ENCODE measurements at regions of chr1 and their contacts with region 1.

Region 1: DNA sequence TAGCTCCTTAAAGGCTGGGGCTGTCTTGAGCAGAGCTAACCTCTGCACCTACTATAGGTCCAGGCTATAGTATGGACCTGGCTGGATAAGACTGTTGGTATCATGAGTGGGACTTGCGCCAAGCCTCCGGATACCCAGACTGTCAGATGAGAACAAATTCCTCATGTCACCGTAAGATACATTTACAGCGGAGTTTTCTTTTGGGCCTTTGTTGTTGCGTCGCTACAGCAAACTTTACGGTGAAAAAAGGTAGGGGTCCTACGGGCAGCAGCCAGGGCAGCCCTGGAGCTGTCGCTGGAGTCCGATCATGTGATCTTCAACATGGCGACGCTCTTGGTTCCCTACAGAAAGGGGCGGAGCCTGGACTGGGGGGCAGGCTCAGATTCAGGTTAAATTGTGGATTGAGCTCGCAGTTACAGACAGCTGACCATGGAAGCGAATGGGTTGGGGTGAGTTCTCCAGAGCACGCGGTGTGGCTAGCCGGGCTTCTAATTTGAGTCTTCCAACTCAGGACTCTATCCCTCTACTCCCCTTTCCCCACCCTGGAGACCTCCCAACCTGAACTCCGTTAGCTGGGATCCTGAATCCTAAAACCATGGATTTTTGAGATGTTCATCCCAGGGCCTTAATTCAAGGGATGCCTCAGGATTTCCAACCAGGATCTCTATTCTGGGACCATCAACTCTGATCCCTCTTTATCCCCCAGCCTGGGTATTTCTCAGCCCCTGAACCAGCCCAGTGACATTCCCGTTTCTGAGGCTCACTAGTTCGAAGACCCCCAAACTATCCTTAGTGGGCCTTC is at the start of gene UROD:
- DNase-seq: peak; percentile 77 to 96 (median 86)
- ATAC-seq: peak; percentile 82
- H3K4me3 ChIP-seq: peak within 1 kb of the TSS; percentile 84
- H3K4me3 Mint-ChIP-seq: peak within 1 kb of the TSS; percentile 89
- H3K27ac ChIP-seq: peak within 1 kb of the TSS; percentile 59 to 62
- H3K27ac Mint-ChIP-seq: peak within 1 kb of the TSS; percentile 91
- H3K4me1 ChIP-seq: peaks cover 63% of the 10 kb centered on the region
- H3K4me1 Mint-ChIP-seq: peaks cover 61% of the 10 kb centered on the region
- H3K27me3 ChIP-seq: no peaks in the 10 kb centered on the region
- H3K27me3 Mint-ChIP-seq: no peaks in the 10 kb centered on the region
- CTCF ChIP-seq: no peak
- total RNA-seq, gene UROD: 41.0 to 42.4 TPM

Region 2: DNA sequence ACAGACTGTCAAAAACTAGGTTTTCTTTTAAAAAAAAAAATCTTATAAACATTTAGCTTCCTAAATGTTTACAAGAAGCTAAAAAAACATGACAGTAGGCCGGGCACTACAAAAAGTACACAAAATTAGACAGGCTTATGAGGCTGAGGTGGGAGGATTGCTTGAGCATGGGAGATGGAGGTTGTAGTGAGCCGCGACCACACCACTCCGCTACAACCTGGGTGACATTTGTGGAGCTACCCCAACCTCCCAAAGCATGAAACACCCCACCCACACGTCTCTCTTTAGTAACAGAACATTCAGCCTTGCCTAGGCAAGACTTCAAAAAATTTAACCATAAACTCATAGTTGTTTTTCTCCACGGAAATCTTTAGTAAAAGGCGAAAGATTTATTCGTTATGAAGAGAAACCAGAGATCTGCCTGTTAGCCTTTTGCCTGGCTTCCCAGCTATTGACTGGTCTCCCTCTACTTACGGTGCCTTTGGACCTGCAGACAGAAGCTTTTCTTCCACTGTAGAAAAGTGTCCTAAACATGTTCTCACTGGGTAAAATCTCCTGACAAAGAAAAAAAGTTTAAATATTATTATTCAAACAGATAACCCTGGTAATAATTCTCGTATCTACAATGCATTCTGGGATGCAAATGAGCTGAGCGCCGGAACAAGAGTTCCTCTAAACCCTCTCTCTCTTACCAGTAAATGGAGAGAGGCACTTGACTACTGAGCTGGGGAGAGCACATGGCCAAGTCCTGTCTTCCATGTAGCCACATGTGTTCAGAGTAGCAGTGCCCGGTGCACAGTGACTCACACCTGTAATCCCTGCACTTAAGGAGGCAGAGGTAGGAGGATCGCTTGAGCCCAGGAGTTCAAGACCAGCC is 290.3 kb before region 1 on chr1:
- CTCF ChIA-PET with region 1: no interaction called
- POLR2A ChIA-PET with region 1: interaction called, 26 read pairs
- intact Hi-C with region 1: loop called in 1 of 2 experiments (anchors 5 kb)
- DNase-seq: peak; percentile 16 to 93 (median 48)
- ATAC-seq: peak; percentile 75
- H3K4me3 ChIP-seq: peak overlapping the region; percentile 6
- H3K4me3 Mint-ChIP-seq: peak overlapping the region; percentile 84
- H3K27ac ChIP-seq: peak overlapping the region; percentile 30 to 76
- H3K27ac Mint-ChIP-seq: peak overlapping the region; percentile 90
- H3K4me1 ChIP-seq: peaks cover 77% of the 10 kb centered on the region
- H3K4me1 Mint-ChIP-seq: peaks cover 68% of the 10 kb centered on the region
- H3K27me3 ChIP-seq: no peaks in the 10 kb centered on the region
- H3K27me3 Mint-ChIP-seq: no peaks in the 10 kb centered on the region
- CTCF ChIP-seq: no peak

Region 3: DNA sequence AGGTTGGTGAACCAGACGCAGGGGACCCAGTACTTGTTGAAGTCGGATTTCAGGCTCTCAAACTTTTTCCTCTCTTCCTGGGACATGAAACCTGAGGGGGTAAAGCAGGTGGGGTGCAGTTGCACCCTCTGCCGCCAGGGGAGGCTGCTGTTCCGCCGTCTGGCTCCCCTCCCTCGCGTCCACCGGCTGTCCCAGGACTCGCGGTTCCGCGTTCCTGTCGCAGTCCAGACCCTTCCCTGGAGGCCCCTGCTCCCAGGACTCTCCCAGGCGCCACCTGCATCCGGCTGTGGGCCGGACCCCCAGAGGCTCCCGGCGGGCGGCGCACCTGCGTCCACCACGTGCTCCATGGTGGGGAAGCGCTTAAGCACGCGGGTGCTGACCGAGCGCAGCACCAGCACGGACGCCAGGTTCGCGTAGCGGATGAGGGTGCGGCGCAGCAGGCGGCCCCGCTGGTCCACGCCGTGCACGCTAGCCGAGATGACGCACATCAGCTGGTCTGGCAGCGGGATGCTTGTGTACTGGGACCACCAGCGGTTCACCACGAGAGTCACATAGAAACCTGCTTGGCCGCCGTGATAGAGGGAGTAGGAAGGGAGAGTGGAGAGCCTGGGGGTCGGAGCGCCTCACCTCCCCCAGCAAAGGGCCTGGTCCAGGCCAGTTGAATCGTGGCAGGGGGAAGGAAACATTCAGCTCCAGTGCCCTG is 225.7 kb before region 1 on chr1:
- CTCF ChIA-PET with region 1: interaction called, 6 read pairs
- POLR2A ChIA-PET with region 1: interaction called, 9 read pairs
- intact Hi-C with region 1: loop called in 1 of 2 experiments (anchors 2 kb)
- DNase-seq: peak; percentile 64 to 89 (median 74)
- ATAC-seq: peak; percentile 84
- H3K4me3 ChIP-seq: peak overlapping the region; percentile 58
- H3K4me3 Mint-ChIP-seq: peak overlapping the region; percentile 86
- H3K27ac ChIP-seq: peak overlapping the region; percentile 4 to 37
- H3K27ac Mint-ChIP-seq: peak overlapping the region; percentile 53
- H3K4me1 ChIP-seq: peaks cover 35% of the 10 kb centered on the region
- H3K4me1 Mint-ChIP-seq: peaks cover 31% of the 10 kb centered on the region
- H3K27me3 ChIP-seq: no peaks in the 10 kb centered on the region
- H3K27me3 Mint-ChIP-seq: no peaks in the 10 kb centered on the region
- CTCF ChIP-seq: peak; percentile 99

Region 4: DNA sequence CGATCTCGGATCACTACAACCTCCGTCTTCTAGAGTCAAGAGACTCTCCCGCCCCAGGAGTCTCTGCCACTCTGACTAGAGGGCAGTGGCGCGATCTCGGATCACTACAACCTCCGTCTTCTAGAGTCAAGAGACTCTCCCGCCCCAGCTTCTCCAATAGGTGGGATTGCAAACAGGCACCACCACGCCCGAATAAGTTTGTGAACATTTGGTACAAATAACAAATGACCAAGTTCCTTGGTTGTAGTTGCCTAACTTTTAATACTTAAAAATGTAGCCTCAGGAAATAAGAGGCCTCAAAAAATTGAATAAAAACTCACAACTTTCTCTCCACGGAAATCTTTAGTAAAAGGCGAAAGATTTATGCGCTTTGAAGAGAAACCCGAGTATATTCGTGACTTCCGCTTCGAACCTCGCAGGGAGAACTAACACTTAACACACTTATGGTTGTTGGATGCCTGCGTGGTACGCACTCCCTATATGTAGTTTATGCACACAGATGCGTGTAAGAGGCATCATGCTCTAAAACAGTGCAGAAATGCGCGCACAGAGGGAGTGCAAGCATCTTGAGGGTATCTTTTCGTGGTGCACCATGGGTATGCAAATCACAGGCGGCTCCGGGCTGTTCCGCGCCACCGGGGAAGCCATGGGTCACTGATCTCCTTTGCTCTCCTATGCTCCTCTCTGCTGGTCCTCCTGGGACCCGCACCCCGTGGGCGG is 192.3 kb before region 1 on chr1:
- CTCF ChIA-PET with region 1: no interaction called
- POLR2A ChIA-PET with region 1: interaction called, 28 read pairs
- intact Hi-C with region 1: no loop called
- DNase-seq: peak; percentile 71 to 90 (median 79)
- ATAC-seq: peak; percentile 78
- H3K4me3 ChIP-seq: peak overlapping the region; percentile 65
- H3K4me3 Mint-ChIP-seq: peak overlapping the region; percentile 94
- H3K27ac ChIP-seq: peak overlapping the region; percentile 96 to 99
- H3K27ac Mint-ChIP-seq: peak overlapping the region; percentile 100
- H3K4me1 ChIP-seq: peaks cover 31% of the 10 kb centered on the region
- H3K4me1 Mint-ChIP-seq: peaks cover 45% of the 10 kb centered on the region
- H3K27me3 ChIP-seq: no peaks in the 10 kb centered on the region
- H3K27me3 Mint-ChIP-seq: no peaks in the 10 kb centered on the region
- CTCF ChIP-seq: no peak

Region 5: GRCh38 chr1:44855742-44856141 is 156.3 kb before region 1 on chr1:
- CTCF ChIA-PET with region 1: no interaction called
- POLR2A ChIA-PET with region 1: no interaction called
- intact Hi-C with region 1: no loop called
- DNase-seq: no peak
- ATAC-seq: no peak
- H3K4me3 ChIP-seq: no peak overlapping the region
- H3K4me3 Mint-ChIP-seq: no peak overlapping the region
- H3K27ac ChIP-seq: no peak overlapping the region
- H3K27ac Mint-ChIP-seq: no peak overlapping the region
- H3K4me1 ChIP-seq: no peaks in the 10 kb centered on the region
- H3K4me1 Mint-ChIP-seq: no peaks in the 10 kb centered on the region
- H3K27me3 ChIP-seq: no peaks in the 10 kb centered on the region
- H3K27me3 Mint-ChIP-seq: no peaks in the 10 kb centered on the region
- CTCF ChIP-seq: no peak

Region 6: GRCh38 chr1:45230540-45230939 is 218.5 kb after region 1 on chr1:
- CTCF ChIA-PET with region 1: no interaction called
- POLR2A ChIA-PET with region 1: no interaction called
- intact Hi-C with region 1: loop called in 1 of 2 experiments (anchors 2 kb)
- DNase-seq: peak in 8 of 14 experiments; percentile 4 to 61 (median 19)
- ATAC-seq: no peak
- H3K4me3 ChIP-seq: no peak overlapping the region
- H3K4me3 Mint-ChIP-seq: no peak overlapping the region
- H3K27ac ChIP-seq: no peak overlapping the region
- H3K27ac Mint-ChIP-seq: no peak overlapping the region
- H3K4me1 ChIP-seq: no peaks in the 10 kb centered on the region
- H3K4me1 Mint-ChIP-seq: no peaks in the 10 kb centered on the region
- H3K27me3 ChIP-seq: no peaks in the 10 kb centered on the region
- H3K27me3 Mint-ChIP-seq: no peaks in the 10 kb centered on the region
- CTCF ChIP-seq: peak; percentile 20

Region 7: GRCh38 chr1:45521398-45522323 is 509.6 kb after region 1 on chr1 and contains the start of gene PRDX1:
- CTCF ChIA-PET with region 1: interaction called, 3 read pairs
- POLR2A ChIA-PET with region 1: interaction called, 12 read pairs
- intact Hi-C with region 1: no loop called
- DNase-seq: peak; percentile 93 to 97 (median 96)
- ATAC-seq: peak; percentile 90
- H3K4me3 ChIP-seq: peak within 1 kb of the TSS; percentile 90
- H3K4me3 Mint-ChIP-seq: peak within 1 kb of the TSS; percentile 97
- H3K27ac ChIP-seq: peak within 1 kb of the TSS; percentile 61 to 65
- H3K27ac Mint-ChIP-seq: peak within 1 kb of the TSS; percentile 86
- H3K4me1 ChIP-seq: peaks cover 36% of the 10 kb centered on the region
- H3K4me1 Mint-ChIP-seq: peaks cover 30% of the 10 kb centered on the region
- H3K27me3 ChIP-seq: no peaks in the 10 kb centered on the region
- H3K27me3 Mint-ChIP-seq: no peaks in the 10 kb centered on the region
- CTCF ChIP-seq: no peak
- total RNA-seq, gene PRDX1: 18.1 to 24.1 TPM

Region 8: GRCh38 chr1:45621501-45621836 is 609.4 kb after region 1 on chr1:
- CTCF ChIA-PET with region 1: no interaction called
- POLR2A ChIA-PET with region 1: no interaction called
- intact Hi-C with region 1: no loop called
- DNase-seq: no peak
- ATAC-seq: no peak
- H3K4me3 ChIP-seq: no peak overlapping the region
- H3K4me3 Mint-ChIP-seq: no peak overlapping the region
- H3K27ac ChIP-seq: no peak overlapping the region
- H3K27ac Mint-ChIP-seq: no peak overlapping the region
- H3K4me1 ChIP-seq: peaks cover 2% of the 10 kb centered on the region
- H3K4me1 Mint-ChIP-seq: peaks cover 12% of the 10 kb centered on the region
- H3K27me3 ChIP-seq: no peaks in the 10 kb centered on the region
- H3K27me3 Mint-ChIP-seq: no peaks in the 10 kb centered on the region
- CTCF ChIP-seq: no peak

Region 9: DNA sequence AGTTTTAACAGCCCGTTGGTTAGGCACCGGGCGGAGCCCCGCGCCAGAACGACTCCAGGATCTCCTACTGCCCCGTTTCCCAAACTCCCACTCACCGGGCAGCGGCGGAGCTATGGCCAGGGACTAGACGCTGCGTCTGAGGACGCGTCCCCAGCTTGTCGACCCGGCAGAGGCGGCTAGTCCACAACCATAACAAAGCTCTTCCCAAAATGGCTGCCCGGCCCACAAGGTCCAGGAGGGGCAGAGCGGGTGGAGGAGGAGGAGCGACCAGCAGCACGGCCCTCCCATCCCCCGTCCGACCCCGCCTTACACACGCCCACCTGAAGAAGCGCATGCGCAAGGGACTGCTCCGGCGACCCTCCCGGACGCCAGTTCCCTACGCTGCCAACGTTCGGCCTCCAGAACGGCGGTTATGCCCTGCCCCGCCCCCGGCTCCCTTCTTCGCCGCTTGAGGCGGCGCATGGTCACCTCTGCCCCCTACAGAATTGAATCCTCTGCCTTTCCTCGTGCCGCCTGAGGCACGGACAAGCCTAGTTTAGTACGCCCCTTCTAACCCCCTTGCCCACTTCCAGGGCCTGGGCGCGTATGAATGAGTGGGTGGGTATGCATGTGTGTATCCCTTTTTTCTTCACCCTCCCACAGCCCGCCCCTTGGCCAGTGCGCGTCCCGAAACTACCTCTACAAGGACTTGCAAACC is 674.4 kb after region 1 on chr1 and contains the start of gene GPBP1L1:
- CTCF ChIA-PET with region 1: no interaction called
- POLR2A ChIA-PET with region 1: interaction called, 7 read pairs
- intact Hi-C with region 1: loop called (anchors 5 to 10 kb)
- DNase-seq: peak; percentile 96 to 99 (median 98)
- ATAC-seq: peak; percentile 68
- H3K4me3 ChIP-seq: peak within 1 kb of the TSS; percentile 95
- H3K4me3 Mint-ChIP-seq: peak within 1 kb of the TSS; percentile 99
- H3K27ac ChIP-seq: peak within 1 kb of the TSS; percentile 97
- H3K27ac Mint-ChIP-seq: peak within 1 kb of the TSS; percentile 100
- H3K4me1 ChIP-seq: peaks cover 44% of the 10 kb centered on the region
- H3K4me1 Mint-ChIP-seq: peaks cover 51% of the 10 kb centered on the region
- H3K27me3 ChIP-seq: no peaks in the 10 kb centered on the region
- H3K27me3 Mint-ChIP-seq: no peaks in the 10 kb centered on the region
- CTCF ChIP-seq: no peak
- total RNA-seq, gene GPBP1L1: 116 to 125 TPM